ENCODE measurements at regions of chr16 and their contacts with region 1.

Region 1: DNA sequence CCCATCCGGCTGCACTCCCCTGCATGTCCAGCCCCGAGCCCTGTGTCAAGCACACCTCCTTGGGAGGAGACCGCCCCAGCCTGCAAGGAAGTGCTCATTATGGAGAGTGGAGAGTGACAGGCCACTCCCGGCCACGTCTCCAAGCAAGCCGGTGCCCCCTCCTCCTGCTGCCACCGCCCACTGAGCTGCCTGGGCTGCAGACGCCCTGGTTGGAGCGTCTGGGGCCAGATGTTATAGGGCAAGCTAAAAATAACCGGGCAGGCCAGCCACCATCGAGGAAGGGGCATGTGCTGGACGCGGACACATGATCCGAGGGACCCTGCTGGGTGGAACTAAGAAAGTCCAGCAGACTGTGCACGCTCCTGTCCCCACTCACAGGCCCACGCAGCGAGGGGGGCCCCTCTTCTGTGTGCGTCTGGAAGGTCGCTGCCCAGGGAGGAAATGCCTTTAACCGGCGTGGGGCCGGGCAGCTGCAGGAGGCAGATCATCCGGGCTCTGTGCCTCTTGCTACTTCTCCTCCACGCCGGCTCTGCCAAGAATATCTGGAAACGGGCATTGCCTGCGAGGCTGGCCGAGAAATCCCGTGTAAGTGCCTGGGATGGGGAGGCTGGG is at the start of gene WFDC1:
- DNase-seq: peak; percentile 36 to 90
- H3K4me3 ChIP-seq: peak within 1 kb of the TSS; percentile 55 to 59
- H3K27ac ChIP-seq: peak within 1 kb of the TSS; percentile 81 to 86
- H3K4me1 ChIP-seq: peaks cover 6 to 74% (median 37%) of the 10 kb centered on the region in 4 donors
- H3K27me3 ChIP-seq: no peaks in the 10 kb centered on the region
- CTCF ChIP-seq: no peak

Region 2: DNA sequence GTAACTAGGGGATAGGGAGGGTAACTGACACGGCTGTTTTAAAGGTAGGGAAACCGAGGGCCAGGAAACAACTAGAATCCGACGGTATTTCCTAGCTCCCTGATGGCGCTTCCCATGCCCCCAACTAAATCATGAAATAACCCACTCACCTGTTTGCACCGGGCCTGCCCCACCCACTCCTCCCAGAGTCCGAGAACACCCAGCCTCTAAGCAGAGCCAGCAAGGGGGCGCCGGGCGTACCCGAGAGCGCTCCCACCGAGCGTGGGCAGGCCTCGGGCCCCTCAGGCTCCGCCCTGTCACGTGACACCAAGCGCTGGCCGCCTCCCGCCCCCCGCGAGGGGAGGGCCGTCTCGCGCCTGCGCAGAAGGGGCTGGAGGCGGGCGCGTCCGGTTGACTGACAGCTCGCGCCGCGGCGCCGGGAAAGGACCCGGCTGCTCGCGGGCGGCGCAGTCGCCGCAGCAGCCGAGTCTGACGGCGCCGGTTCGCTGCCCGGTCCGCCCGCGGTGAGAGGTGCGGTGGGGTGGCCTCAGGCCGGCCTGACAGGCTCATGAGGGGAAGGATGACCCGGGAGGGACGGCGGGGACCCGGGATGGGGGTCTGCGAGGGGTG is 732.8 kb after region 1 on chr16 and contains the start of gene KIAA0513:
- intact Hi-C with region 1: loop called (anchors 5 kb)
- DNase-seq: peak; percentile 91 to 95
- H3K4me3 ChIP-seq: peak within 1 kb of the TSS; percentile 64 to 79
- H3K27ac ChIP-seq: peak within 1 kb of the TSS; percentile 73 to 86
- H3K4me1 ChIP-seq: peaks cover 0 to 33% (median 20%) of the 10 kb centered on the region in 4 donors
- H3K27me3 ChIP-seq: no peaks in the 10 kb centered on the region
- CTCF ChIP-seq: peak in 1 of 2 experiments; percentile 21

Measured in tibial artery (tissue), 4 donors.